ENCODE measurements at regions of chr9 and their contacts with region 1.

Region 1: GRCh38 chr9:86112057-86112456 is 12.7 kb upstream of the GOLM1 start:
- DNase-seq: no peak
- H3K4me3 Mint-ChIP-seq: no peak overlapping the region
- H3K27ac Mint-ChIP-seq: no peak overlapping the region
- H3K4me1 Mint-ChIP-seq: peaks cover 2% of the 10 kb centered on the region
- H3K27me3 Mint-ChIP-seq: peaks cover 6% of the 10 kb centered on the region

Region 2: GRCh38 chr9:85940832-85941621 is 171.0 kb before region 1 on chr9 and contains the start of gene NAA35:
- CTCF ChIA-PET with region 1: no interaction called
- POLR2A ChIA-PET with region 1: no interaction called
- intact Hi-C with region 1: loop called (anchors 2 kb)
- DNase-seq: peak; percentile 99
- H3K4me3 Mint-ChIP-seq: no peak within 1 kb of the TSS
- H3K27ac Mint-ChIP-seq: peak within 1 kb of the TSS; percentile 96
- H3K4me1 Mint-ChIP-seq: peaks cover 15% of the 10 kb centered on the region
- H3K27me3 Mint-ChIP-seq: no peaks in the 10 kb centered on the region
- total RNA-seq, gene NAA35: 23.0 to 24.3 TPM

Region 3: GRCh38 chr9:86282077-86282978 is 170.3 kb after region 1 on chr9 and contains the start of gene ISCA1:
- CTCF ChIA-PET with region 1: no interaction called
- POLR2A ChIA-PET with region 1: no interaction called
- intact Hi-C with region 1: no loop called
- DNase-seq: peak; percentile 97
- H3K4me3 Mint-ChIP-seq: peak within 1 kb of the TSS; percentile 92
- H3K27ac Mint-ChIP-seq: peak within 1 kb of the TSS; percentile 96
- H3K4me1 Mint-ChIP-seq: peaks cover 44% of the 10 kb centered on the region
- H3K27me3 Mint-ChIP-seq: no peaks in the 10 kb centered on the region
- total RNA-seq, gene ISCA1: 21.4 to 22.1 TPM

Measured in activated CD4-positive, alpha-beta memory T cell treated with anti-CD3 and anti-CD28 coated beads for 36 hours (primary cell).